Natural killer cell (primary cell): ENCODE measurements at regions of chr15 and their contacts with region 1.

Region 1: DNA sequence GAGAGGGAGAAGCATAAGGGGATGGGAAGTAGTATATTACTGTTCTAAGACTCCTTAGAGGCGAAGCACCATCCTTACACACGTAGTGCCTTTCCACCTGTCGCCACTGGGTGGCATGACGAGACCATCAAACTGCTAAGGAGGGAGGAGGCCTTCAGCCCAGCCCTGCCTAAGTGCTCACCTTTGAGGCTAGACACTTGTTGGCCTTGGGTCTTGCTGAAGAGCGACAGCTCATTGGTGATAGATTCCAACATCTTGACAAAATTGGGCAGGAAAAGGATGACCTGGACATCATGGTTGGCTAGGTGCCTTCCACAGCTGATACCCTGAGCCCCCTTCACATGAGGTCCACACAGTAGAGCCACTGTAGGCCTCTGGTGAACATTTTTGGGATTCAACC is 19.6 kb downstream of the CLK3 start:
- DNase-seq: peak; percentile 60 to 88
- ATAC-seq: peak; percentile 82 to 93 (median 83)
- H3K4me3 ChIP-seq: no peak overlapping the region
- H3K4me3 Mint-ChIP-seq: no peak overlapping the region
- H3K27ac ChIP-seq: no peak overlapping the region
- H3K27ac Mint-ChIP-seq: peak overlapping the region in 1 of 2 donors; percentile 2
- H3K4me1 ChIP-seq: peaks cover under 1% of the 10 kb centered on the region
- H3K4me1 Mint-ChIP-seq: peaks cover 6 to 10% of the 10 kb centered on the region in 2 donors
- H3K27me3 ChIP-seq: no peaks in the 10 kb centered on the region
- H3K27me3 Mint-ChIP-seq: no peaks in the 10 kb centered on the region
- CTCF ChIP-seq: peak; percentile 95

Region 2: GRCh38 chr15:74373731-74374647 is 261.2 kb before region 1 on chr15:
- intact Hi-C with region 1: loop called (anchors 2 kb)
- DNase-seq: peak; percentile 91 to 96
- ATAC-seq: peak; percentile 94 to 97 (median 96)
- H3K4me3 ChIP-seq: peak overlapping the region; percentile 81
- H3K4me3 Mint-ChIP-seq: peak overlapping the region; percentile 78
- H3K27ac ChIP-seq: peak overlapping the region; percentile 48
- H3K27ac Mint-ChIP-seq: peak overlapping the region; percentile 35 to 68
- H3K4me1 ChIP-seq: peaks cover 20% of the 10 kb centered on the region
- H3K4me1 Mint-ChIP-seq: peaks cover 12 to 22% of the 10 kb centered on the region in 2 donors
- H3K27me3 ChIP-seq: no peaks in the 10 kb centered on the region
- H3K27me3 Mint-ChIP-seq: peaks cover 7 to 13% of the 10 kb centered on the region in 2 donors
- CTCF ChIP-seq: peak; percentile 94

Region 3: DNA sequence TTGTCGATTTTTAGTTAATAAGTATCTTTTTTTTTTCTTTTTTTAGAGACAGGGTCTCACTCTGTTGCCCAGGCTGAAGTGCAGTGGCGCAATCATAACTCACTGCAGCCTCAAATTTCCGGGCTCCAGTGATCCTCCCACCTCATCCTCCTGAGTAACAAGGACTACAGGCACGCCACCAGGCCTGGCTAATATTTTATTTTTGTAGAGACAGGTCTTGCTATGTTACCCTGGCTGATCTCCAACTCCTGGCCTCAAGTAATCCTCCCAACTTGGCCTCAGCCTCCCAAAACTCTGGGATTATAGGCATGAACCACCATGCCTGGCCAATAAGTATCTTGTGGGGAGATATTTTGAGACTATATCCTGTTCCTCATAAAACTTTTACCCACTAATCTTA is 123.6 kb before region 1 on chr15:
- intact Hi-C with region 1: no loop called
- DNase-seq: no peak
- ATAC-seq: no peak
- H3K4me3 ChIP-seq: no peak overlapping the region
- H3K4me3 Mint-ChIP-seq: no peak overlapping the region
- H3K27ac ChIP-seq: peak overlapping the region; percentile 45
- H3K27ac Mint-ChIP-seq: peak overlapping the region in 1 of 2 donors; percentile 76
- H3K4me1 ChIP-seq: peaks cover 12% of the 10 kb centered on the region
- H3K4me1 Mint-ChIP-seq: peaks cover 10% of the 10 kb centered on the region in 2 donors
- H3K27me3 ChIP-seq: no peaks in the 10 kb centered on the region
- H3K27me3 Mint-ChIP-seq: no peaks in the 10 kb centered on the region
- CTCF ChIP-seq: no peak

Region 4: GRCh38 chr15:74768771-74769342 is 133.6 kb after region 1 on chr15:
- intact Hi-C with region 1: loop called (anchors 1 kb)
- DNase-seq: peak; percentile 53 to 80
- ATAC-seq: peak; percentile 60 to 68 (median 65)
- H3K4me3 ChIP-seq: no peak overlapping the region
- H3K4me3 Mint-ChIP-seq: no peak overlapping the region
- H3K27ac ChIP-seq: no peak overlapping the region
- H3K27ac Mint-ChIP-seq: peak overlapping the region in 1 of 2 donors; percentile 35
- H3K4me1 ChIP-seq: peaks cover 26% of the 10 kb centered on the region
- H3K4me1 Mint-ChIP-seq: peaks cover 6 to 11% of the 10 kb centered on the region in 2 donors
- H3K27me3 ChIP-seq: no peaks in the 10 kb centered on the region
- H3K27me3 Mint-ChIP-seq: peaks cover 7 to 11% of the 10 kb centered on the region in 2 donors
- CTCF ChIP-seq: peak; percentile 82

Region 5: GRCh38 chr15:74799856-74800547 is 164.8 kb after region 1 on chr15:
- intact Hi-C with region 1: loop called (anchors 1 kb)
- DNase-seq: peak; percentile 90 to 94
- ATAC-seq: peak; percentile 89 to 98 (median 93)
- H3K4me3 ChIP-seq: no peak overlapping the region
- H3K4me3 Mint-ChIP-seq: peak overlapping the region; percentile 75
- H3K27ac ChIP-seq: peak overlapping the region; percentile 97
- H3K27ac Mint-ChIP-seq: peak overlapping the region; percentile 92 to 93
- H3K4me1 ChIP-seq: peaks cover 63% of the 10 kb centered on the region
- H3K4me1 Mint-ChIP-seq: peaks cover 31 to 57% of the 10 kb centered on the region in 2 donors
- H3K27me3 ChIP-seq: no peaks in the 10 kb centered on the region
- H3K27me3 Mint-ChIP-seq: no peaks in the 10 kb centered on the region
- CTCF ChIP-seq: peak; percentile 94

Region 6: DNA sequence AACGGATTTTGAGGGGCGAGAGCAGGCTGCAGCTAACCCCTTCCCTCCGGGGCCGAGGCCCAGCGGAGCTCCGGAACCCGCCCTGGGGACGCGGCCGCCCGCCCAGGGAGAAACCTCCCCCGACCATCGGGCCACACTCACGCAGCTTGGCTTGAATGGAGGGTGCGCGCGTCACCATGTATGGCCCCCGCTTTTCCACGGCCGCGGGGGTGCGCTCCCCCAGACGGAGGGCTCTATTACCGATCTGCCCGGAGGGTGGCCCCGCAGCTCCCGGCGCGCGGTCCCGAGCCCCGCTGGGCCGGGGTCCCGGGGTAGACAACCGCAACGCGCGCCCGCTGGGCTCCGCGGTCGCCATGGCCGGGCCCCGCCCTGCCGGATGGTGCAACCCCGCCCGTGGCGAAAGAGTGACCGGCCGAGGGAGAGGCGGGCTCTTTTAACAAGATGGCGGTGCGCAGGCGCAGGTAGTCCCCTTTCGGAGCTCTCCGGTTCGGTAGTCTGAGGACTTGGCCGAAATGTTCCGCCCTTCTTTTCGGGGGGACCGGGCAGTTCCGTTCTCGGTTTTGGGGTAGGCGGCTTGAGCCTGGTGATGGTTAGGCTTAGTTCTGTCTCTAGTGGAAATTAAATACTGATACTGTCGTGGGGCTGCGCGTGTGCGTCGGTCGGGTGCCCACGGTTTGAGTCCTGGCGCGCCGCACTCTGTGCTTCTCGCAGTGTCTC is 271.4 kb after region 1 on chr15 and contains the start of gene FAM219B:
- intact Hi-C with region 1: loop called (anchors 2 kb)
- DNase-seq: peak; percentile 78 to 82
- ATAC-seq: peak; percentile 92 to 95 (median 93)
- H3K4me3 ChIP-seq: peak within 1 kb of the TSS; percentile 90
- H3K4me3 Mint-ChIP-seq: peak within 1 kb of the TSS; percentile 98
- H3K27ac ChIP-seq: peak within 1 kb of the TSS; percentile 75
- H3K27ac Mint-ChIP-seq: peak within 1 kb of the TSS; percentile 93 to 96
- H3K4me1 ChIP-seq: peaks cover 27% of the 10 kb centered on the region
- H3K4me1 Mint-ChIP-seq: peaks cover 20 to 33% of the 10 kb centered on the region in 2 donors
- H3K27me3 ChIP-seq: no peaks in the 10 kb centered on the region
- H3K27me3 Mint-ChIP-seq: no peaks in the 10 kb centered on the region
- CTCF ChIP-seq: no peak
- total RNA-seq, gene FAM219B: 63.5 to 107 (median 69.0) TPM

Region 7: GRCh38 chr15:74950078-74951000 is 315.1 kb after region 1 on chr15:
- intact Hi-C with region 1: loop called (anchors 1 kb)
- DNase-seq: peak; percentile 69 to 90
- ATAC-seq: peak; percentile 88 to 99 (median 97)
- H3K4me3 ChIP-seq: no peak overlapping the region
- H3K4me3 Mint-ChIP-seq: no peak overlapping the region
- H3K27ac ChIP-seq: no peak overlapping the region
- H3K27ac Mint-ChIP-seq: no peak overlapping the region
- H3K4me1 ChIP-seq: no peaks in the 10 kb centered on the region
- H3K4me1 Mint-ChIP-seq: peaks cover 0 to 4% of the 10 kb centered on the region in 2 donors
- H3K27me3 ChIP-seq: no peaks in the 10 kb centered on the region
- H3K27me3 Mint-ChIP-seq: peaks cover 0 to 4% of the 10 kb centered on the region in 2 donors
- CTCF ChIP-seq: peak; percentile 91